Naive thymus-derived CD4-positive, alpha-beta T cell (primary cell): ENCODE measurements at regions of chr12 and their contacts with region 1.

Region 1: GRCh38 chr12:52023182-52023975 is 16.6 kb downstream of the TAMALIN start:
- DNase-seq: peak; percentile 80 to 98 (median 90)
- ATAC-seq: peak; percentile 80
- H3K4me3 ChIP-seq: peak overlapping the region; percentile 71
- H3K4me3 Mint-ChIP-seq: peak overlapping the region; percentile 77 to 96 (median 87)
- H3K27ac ChIP-seq: peak overlapping the region; percentile 69
- H3K27ac Mint-ChIP-seq: peak overlapping the region; percentile 85 to 99 (median 93)
- H3K4me1 ChIP-seq: peaks cover 17 to 29% of the 10 kb centered on the region in 2 donors
- H3K4me1 Mint-ChIP-seq: peaks cover 34 to 49% (median 40%) of the 10 kb centered on the region in 7 donors
- H3K27me3 ChIP-seq: no peaks in the 10 kb centered on the region
- H3K27me3 Mint-ChIP-seq: peaks cover 0 to 16% (median 0%) of the 10 kb centered on the region in 5 donors

Region 2: DNA sequence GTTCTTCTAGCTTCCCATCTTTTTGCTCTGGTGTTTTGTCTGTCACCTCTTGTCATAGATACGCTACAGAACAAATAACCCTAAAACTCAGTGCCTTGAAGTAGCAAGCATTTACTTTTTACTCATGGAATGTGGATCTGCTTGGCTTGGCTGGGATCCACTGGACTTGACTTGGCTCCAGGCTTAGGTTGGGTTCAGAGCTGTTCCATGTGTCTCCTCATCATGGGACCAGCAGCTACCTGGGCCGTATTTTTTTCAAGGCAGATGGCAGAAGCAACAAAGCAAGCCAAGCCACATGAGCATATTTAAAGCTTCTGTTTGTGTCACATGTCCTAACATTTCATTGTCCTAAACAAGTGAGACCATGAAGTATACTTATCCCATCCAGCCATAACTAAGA is 1308.2 kb before region 1 on chr12:
- CTCF ChIA-PET with region 1: no interaction called
- POLR2A ChIA-PET with region 1: no interaction called
- intact Hi-C with region 1: no loop called
- DNase-seq: no peak
- ATAC-seq: no peak
- H3K4me3 ChIP-seq: no peak overlapping the region
- H3K4me3 Mint-ChIP-seq: no peak overlapping the region
- H3K27ac ChIP-seq: no peak overlapping the region
- H3K27ac Mint-ChIP-seq: peak overlapping the region in 4 of 9 donors; percentile 17 to 45 (median 18)
- H3K4me1 ChIP-seq: no peaks in the 10 kb centered on the region
- H3K4me1 Mint-ChIP-seq: no peaks in the 10 kb centered on the region
- H3K27me3 ChIP-seq: no peaks in the 10 kb centered on the region
- H3K27me3 Mint-ChIP-seq: no peaks in the 10 kb centered on the region

Region 3: GRCh38 chr12:51951199-51951842 is 72.1 kb before region 1 on chr12 and contains the start of gene ACVR1B:
- CTCF ChIA-PET with region 1: interaction called, 5 read pairs
- POLR2A ChIA-PET with region 1: interaction called, 4 read pairs
- intact Hi-C with region 1: loop called in 1 of 2 experiments (anchors 1 kb)
- DNase-seq: peak; percentile 80 to 93 (median 89)
- ATAC-seq: peak; percentile 97
- H3K4me3 ChIP-seq: peak within 1 kb of the TSS; percentile 70
- H3K4me3 Mint-ChIP-seq: peak within 1 kb of the TSS; percentile 87 to 100 (median 97)
- H3K27ac ChIP-seq: peak within 1 kb of the TSS; percentile 88
- H3K27ac Mint-ChIP-seq: peak within 1 kb of the TSS; percentile 79 to 97 (median 94)
- H3K4me1 ChIP-seq: peaks cover 16 to 20% of the 10 kb centered on the region in 2 donors
- H3K4me1 Mint-ChIP-seq: peaks cover 25 to 49% (median 39%) of the 10 kb centered on the region in 7 donors
- H3K27me3 ChIP-seq: no peaks in the 10 kb centered on the region
- H3K27me3 Mint-ChIP-seq: peaks cover 0 to 66% (median 0%) of the 10 kb centered on the region in 5 donors
- total RNA-seq, gene ACVR1B: 4.9 to 14.8 (median 14.2) TPM

Region 4: DNA sequence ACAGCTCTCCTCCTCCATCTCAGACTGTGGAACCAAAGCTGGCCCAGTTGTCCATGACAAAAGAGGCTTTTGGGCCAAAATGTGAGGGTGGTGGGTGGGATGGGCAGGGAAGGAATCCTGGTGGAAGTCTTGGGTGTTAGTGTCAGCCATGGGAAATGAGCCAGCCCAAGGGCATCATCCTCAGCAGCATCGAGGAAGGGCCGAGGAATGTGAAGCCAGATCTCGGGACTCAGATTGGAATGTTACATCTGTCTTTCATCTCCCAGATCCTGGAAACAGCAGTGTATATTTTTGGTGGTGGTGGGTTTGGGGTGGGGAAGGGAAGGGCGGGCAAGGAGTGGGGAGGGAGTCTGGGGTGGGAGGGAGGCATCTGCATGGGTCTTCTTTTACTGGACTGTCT is 28.4 kb before region 1 on chr12:
- CTCF ChIA-PET with region 1: interaction called, 319 read pairs
- POLR2A ChIA-PET with region 1: interaction called, 19 read pairs
- intact Hi-C with region 1: loop called (anchors 1 kb)
- DNase-seq: no peak
- ATAC-seq: no peak
- H3K4me3 ChIP-seq: no peak overlapping the region
- H3K4me3 Mint-ChIP-seq: no peak overlapping the region
- H3K27ac ChIP-seq: no peak overlapping the region
- H3K27ac Mint-ChIP-seq: peak overlapping the region in 1 of 9 donors; percentile 37
- H3K4me1 ChIP-seq: no peaks in the 10 kb centered on the region
- H3K4me1 Mint-ChIP-seq: peaks cover 4 to 8% (median 5%) of the 10 kb centered on the region in 7 donors
- H3K27me3 ChIP-seq: no peaks in the 10 kb centered on the region
- H3K27me3 Mint-ChIP-seq: no peaks in the 10 kb centered on the region

Region 5: DNA sequence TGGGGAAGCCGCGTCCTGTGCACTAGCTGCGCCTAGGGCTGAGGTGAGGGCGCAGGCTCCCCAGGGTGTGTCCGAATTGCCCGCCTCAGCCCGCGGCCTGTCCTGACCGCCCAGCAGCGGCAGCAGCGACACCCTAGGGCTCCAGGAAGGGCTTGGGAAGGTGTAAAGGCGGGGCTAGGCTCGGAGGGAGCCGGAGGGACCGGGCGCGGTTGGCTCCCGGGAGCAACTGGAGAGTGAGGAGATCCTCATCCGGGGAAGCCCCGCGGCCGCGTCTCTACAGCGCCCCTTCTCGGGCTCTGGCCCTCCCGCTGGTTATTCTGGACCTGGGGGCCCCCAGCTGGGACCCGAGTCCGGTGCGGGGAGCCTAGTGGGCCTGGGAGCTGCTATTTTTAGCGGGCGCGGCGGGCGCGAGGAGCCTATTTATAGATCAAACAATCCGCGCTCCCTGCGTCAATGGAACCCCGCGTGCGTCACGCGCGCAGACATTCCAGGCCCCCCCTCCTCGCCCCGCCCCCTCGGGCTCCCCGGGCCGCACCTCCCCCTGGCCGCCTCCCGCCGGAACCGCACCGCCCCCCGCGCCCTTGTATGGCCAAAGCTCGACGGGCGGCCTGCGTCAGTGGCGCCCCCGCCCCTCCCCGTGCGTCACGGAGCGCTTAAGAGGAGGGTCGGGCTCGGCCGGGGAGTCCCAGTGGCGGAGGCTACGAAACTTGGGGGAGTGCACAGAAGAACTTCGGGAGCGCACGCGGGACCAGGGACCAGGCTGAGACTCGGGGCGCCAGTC is 27.6 kb after region 1 on chr12 and contains the start of gene NR4A1:
- CTCF ChIA-PET with region 1: interaction called, 17 read pairs
- POLR2A ChIA-PET with region 1: interaction called, 10 read pairs
- intact Hi-C with region 1: loop called (anchors 1 kb)
- DNase-seq: peak; percentile 98 to 100 (median 99)
- ATAC-seq: peak; percentile 96
- H3K4me3 ChIP-seq: peak within 1 kb of the TSS; percentile 71
- H3K4me3 Mint-ChIP-seq: peak within 1 kb of the TSS; percentile 90 to 98 (median 94)
- H3K27ac ChIP-seq: peak within 1 kb of the TSS; percentile 93
- H3K27ac Mint-ChIP-seq: peak within 1 kb of the TSS; percentile 59 to 100 (median 99)
- H3K4me1 ChIP-seq: peaks cover 21 to 22% of the 10 kb centered on the region in 2 donors
- H3K4me1 Mint-ChIP-seq: peaks cover 23 to 41% (median 37%) of the 10 kb centered on the region in 7 donors
- H3K27me3 ChIP-seq: no peaks in the 10 kb centered on the region
- H3K27me3 Mint-ChIP-seq: peaks cover 0 to 9% (median 0%) of the 10 kb centered on the region in 5 donors
- total RNA-seq, gene NR4A1: 0.89 to 279 (median 7.1) TPM

Region 6: GRCh38 chr12:52082988-52083637 is 59.7 kb after region 1 on chr12:
- CTCF ChIA-PET with region 1: interaction called, 457 read pairs
- POLR2A ChIA-PET with region 1: interaction called, 37 read pairs
- intact Hi-C with region 1: loop called (anchors 1 kb)
- DNase-seq: peak; percentile 49 to 74 (median 66)
- ATAC-seq: peak; percentile 86
- H3K4me3 ChIP-seq: no peak overlapping the region
- H3K4me3 Mint-ChIP-seq: peak overlapping the region in 2 of 10 donors; percentile 17 to 52
- H3K27ac ChIP-seq: no peak overlapping the region
- H3K27ac Mint-ChIP-seq: peak overlapping the region in 4 of 9 donors; percentile 47 to 83 (median 72)
- H3K4me1 ChIP-seq: peaks cover 0 to 12% of the 10 kb centered on the region in 2 donors
- H3K4me1 Mint-ChIP-seq: peaks cover 6 to 17% (median 12%) of the 10 kb centered on the region in 7 donors
- H3K27me3 ChIP-seq: no peaks in the 10 kb centered on the region
- H3K27me3 Mint-ChIP-seq: peaks cover 4 to 14% (median 10%) of the 10 kb centered on the region in 5 donors